Adrenal gland (tissue), 19 donors: ENCODE measurements at regions of chr5 and their contacts with region 1.

Region 1: DNA sequence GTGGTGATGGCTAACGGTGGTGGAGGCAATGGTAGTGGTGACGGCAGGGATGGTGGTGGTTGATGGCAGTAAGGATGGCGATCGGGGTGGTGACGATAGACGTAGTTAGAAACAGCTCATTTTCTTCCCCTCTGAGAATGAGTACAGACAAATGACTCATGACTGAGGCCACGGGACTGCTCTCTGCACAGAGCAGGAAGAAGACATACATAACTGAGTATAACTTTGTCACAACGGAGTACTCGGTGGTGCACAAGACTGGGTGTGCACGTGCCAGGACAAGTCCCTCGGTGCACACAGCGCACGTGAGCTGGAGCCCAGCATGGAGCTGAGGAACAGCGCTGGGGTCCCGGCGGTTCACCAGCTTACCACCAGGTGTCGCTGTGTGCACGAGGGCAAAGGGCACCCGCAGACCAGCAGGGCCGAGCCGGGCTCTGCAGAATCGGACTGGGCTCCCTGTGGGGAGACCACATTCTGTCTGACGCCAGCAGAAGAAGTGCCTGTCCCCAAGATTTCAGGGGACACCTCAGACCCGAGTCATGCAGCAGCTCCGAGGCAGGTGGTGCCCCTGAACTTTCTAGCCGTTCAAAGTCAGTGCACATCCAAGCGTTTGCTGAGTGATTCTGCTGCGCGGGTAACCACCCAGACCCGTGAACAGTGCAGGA is 188.6 kb downstream of the FSTL4 start:
- DNase-seq: peak; percentile 52 to 81 (median 72)
- H3K4me3 ChIP-seq: no peak overlapping the region
- H3K27ac ChIP-seq: no peak overlapping the region
- H3K4me1 ChIP-seq: no peaks in the 10 kb centered on the region
- H3K27me3 ChIP-seq: no peaks in the 10 kb centered on the region
- CTCF ChIP-seq: peak; percentile 92 to 98 (median 96)
- POLR2A ChIP-seq: no peak

Region 2: GRCh38 chr5:133610489-133611356 is 187.0 kb after region 1 on chr5:
- intact Hi-C with region 1: loop called in 1 of 2 experiments (anchors 5 kb)
- DNase-seq: peak; percentile 64 to 80 (median 74)
- H3K4me3 ChIP-seq: peak overlapping the region in 2 of 4 donors; percentile 3 to 55
- H3K27ac ChIP-seq: no peak overlapping the region
- H3K4me1 ChIP-seq: peaks cover 18 to 26% of the 10 kb centered on the region in 2 donors
- H3K27me3 ChIP-seq: peaks cover 24% of the 10 kb centered on the region
- CTCF ChIP-seq: peak; percentile 7 to 49 (median 38)
- POLR2A ChIP-seq: peak in 1 of 2 donors; percentile 46

Region 3: DNA sequence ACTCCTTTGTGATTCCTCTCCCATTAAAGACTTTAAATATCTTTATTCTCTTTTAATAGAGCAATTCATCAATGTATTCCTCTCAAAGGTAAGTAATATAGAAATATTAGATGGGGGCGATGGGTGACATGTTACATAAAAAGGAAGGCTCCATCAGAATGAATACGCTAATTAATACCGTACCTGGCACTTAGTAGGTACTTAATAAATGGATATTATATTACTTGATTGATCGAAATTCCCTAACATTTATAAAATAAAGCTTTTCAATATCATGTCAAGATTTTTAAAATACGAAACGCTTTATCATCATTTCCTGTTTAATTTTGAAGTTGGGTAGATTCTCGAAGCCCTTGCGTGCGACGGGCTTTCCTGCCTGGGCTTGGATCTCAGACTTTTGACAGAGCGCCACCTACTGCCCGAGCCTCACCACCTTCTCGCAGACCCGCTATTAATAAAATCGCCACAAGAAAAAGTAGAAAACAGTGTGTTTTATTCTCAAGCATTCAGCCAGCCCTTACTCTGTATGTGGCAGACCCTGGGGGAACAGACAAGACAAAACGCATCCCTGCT is 445.3 kb after region 1 on chr5:
- intact Hi-C with region 1: loop called (anchors 5 to 10 kb)
- DNase-seq: peak; percentile 60 to 90 (median 85)
- H3K4me3 ChIP-seq: peak overlapping the region in 1 of 4 donors; percentile 1
- H3K27ac ChIP-seq: no peak overlapping the region
- H3K4me1 ChIP-seq: peaks cover 0 to 8% of the 10 kb centered on the region in 2 donors
- H3K27me3 ChIP-seq: no peaks in the 10 kb centered on the region
- CTCF ChIP-seq: peak; percentile 69 to 88 (median 74)
- POLR2A ChIP-seq: no peak

Region 4: GRCh38 chr5:133944263-133945185 is 520.8 kb after region 1 on chr5:
- intact Hi-C with region 1: loop called in 1 of 2 experiments (anchors 5 kb)
- DNase-seq: peak; percentile 69 to 89 (median 82)
- H3K4me3 ChIP-seq: no peak overlapping the region
- H3K27ac ChIP-seq: peak overlapping the region; percentile 7 to 79 (median 58)
- H3K4me1 ChIP-seq: peaks cover 15 to 24% of the 10 kb centered on the region in 2 donors
- H3K27me3 ChIP-seq: no peaks in the 10 kb centered on the region
- CTCF ChIP-seq: peak; percentile 67 to 88 (median 80)
- POLR2A ChIP-seq: no peak